Dendritic cell treated with granulocyte-macrophage colony-stimulating factor and Interleukin-4, amounts not matched to agents 40 ng/mL and 50 ng/mL, for 4 days (primary cell): ENCODE measurements at regions of chr5 and their contacts with region 1.

Region 1: DNA sequence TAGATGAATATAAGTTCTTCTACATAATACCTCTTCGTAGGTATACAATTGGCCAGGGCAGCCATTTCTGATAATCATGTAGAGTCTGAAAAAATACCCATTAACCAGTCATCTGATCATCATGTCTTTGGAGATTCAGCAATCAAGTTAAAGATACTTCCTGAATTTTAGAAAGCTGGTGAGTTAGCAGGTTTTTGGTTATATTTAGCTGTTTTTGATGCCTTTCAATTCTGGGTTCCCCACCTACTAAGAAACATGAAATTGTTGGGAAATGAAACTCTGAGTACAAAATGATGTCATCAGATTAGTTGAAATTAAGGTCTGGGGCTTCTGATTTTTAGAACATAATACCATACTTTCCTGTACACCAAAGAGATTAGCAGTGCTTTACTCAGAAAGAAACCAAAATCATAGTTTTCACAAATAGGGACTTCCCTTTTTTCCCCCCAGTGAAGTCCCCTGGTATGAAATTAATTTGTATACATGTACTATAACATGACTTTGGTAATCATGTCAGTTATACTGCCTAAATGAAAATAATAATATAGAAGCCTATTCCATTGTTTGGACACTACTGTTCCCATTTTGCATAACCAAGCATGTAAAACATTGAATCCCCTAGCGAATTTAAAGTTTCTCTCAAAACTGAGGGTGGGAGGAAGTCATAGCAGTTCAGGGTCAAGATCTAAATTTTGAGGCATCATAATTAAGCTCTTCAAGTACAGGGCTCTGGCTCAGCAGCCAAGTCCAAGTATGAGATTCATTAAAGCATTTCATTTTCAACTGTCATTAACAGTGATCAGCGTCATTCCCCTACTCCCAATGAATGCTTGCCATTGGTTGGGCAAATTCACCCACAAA is 17.9 kb downstream of the PRLR start:
- H3K4me3 Mint-ChIP-seq: no peak overlapping the region
- H3K27ac Mint-ChIP-seq: peak overlapping the region; percentile 48
- H3K4me1 Mint-ChIP-seq: peaks cover 23% of the 10 kb centered on the region
- H3K27me3 Mint-ChIP-seq: no peaks in the 10 kb centered on the region

Region 2: GRCh38 chr5:35319333-35320002 is 107.1 kb after region 1 on chr5:
- intact Hi-C with region 1: loop called (anchors 10 kb)
- H3K4me3 Mint-ChIP-seq: no peak overlapping the region
- H3K27ac Mint-ChIP-seq: no peak overlapping the region
- H3K4me1 Mint-ChIP-seq: peaks cover 8% of the 10 kb centered on the region
- H3K27me3 Mint-ChIP-seq: no peaks in the 10 kb centered on the region